GM12878 (cell line): ENCODE measurements at regions of chr1 and their contacts with region 1.

Region 1: DNA sequence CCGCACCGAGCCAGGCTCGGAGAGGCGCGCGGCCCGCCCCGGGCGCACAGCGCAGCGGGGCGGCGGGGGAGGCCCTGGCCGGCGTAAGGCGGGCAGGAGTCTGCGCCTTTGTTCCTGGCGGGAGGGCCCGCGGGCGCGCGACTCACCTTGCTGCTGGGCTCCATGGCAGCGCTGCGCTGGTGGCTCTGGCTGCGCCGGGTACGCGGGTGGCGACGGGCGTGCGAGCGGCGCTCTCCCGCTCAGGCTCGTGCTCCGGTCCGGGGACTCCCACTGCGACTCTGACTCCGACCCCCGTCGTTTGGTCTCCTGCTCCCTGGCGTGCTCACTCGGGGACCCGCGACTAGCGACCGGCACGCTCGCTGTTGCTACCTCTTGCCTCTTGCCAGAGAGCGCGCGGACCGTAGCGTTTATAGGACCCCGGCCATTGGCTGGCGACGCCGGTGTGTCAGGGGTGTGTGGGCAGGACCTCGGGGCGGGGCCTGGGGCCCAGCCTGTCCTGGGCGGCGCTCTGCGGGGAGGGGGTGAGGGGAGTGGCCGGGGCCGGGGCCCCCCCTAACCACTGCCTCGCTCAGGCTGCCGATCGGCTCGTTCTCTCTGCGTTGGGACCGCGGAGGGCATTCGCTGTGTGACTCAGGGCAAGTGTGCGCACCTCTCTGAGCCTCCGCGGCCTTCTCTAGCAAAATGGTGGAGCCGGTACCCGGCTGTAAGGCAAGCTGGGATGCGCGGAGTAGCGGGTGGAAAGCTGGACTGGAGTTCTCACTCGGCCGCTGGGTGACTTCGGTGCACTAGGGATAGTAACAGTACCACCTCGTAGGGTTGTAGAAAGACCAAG is at the start of gene SLC2A1:
- DNase-seq: peak; percentile 79
- ATAC-seq: peak; percentile 88
- H3K4me3 ChIP-seq: peak within 1 kb of the TSS; percentile 88
- H3K27ac ChIP-seq: peak within 1 kb of the TSS; percentile 78
- H3K4me1 ChIP-seq: peaks cover 38% of the 10 kb centered on the region
- H3K27me3 ChIP-seq: no peaks in the 10 kb centered on the region
- CTCF ChIP-seq: no peak; a peak in 1 of 6 replicates
- EP300 ChIP-seq: peak in 1 of 2 experiments; percentile 14; a peak in 1 of 4 replicates
- POLR2A ChIP-seq: peak; percentile 100
- RAD21 ChIP-seq: no peak
- polyA plus RNA-seq, gene SLC2A1: 5.7 to 8.2 TPM

Region 2: DNA sequence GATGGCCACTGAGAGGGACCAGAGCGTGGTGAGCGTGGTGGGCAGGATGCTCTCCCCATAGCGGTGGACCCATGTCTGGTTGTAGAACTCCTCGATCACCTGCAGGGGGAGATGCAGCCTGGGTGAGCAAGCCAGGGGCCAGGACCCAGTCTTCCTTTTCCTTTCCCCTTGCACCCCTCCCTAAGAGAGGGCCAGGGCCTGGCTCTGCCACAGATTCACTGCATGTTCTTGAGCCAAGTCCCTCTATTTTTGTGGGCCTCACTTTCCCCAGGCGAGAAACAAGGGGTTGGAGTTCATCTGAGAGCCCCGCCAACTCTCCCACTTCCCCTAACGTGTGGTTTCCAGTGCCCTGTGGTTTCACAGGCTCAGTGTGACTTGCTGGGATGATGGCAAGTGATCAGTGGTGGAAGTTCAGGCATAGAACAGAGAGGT is 27.6 kb before region 1 on chr1:
- CTCF ChIA-PET with region 1: interaction called, 57 read pairs
- POLR2A ChIA-PET with region 1: interaction called, 22 read pairs
- RAD21 ChIA-PET with region 1: interaction called, 21 read pairs
- SMC1A ChIA-PET with region 1: interaction called, 71 read pairs
- in situ Hi-C with region 1: no loop called
- intact Hi-C with region 1: loop called (anchors 1 kb)
- DNase-seq: peak; percentile 69
- ATAC-seq: peak; percentile 61
- H3K4me3 ChIP-seq: 0 out of 2 replicates have a peak overlapping the region, but pooled peaks have one; percentile 17
- H3K27ac ChIP-seq: peak overlapping the region; percentile 95
- H3K4me1 ChIP-seq: peaks cover 63% of the 10 kb centered on the region
- H3K27me3 ChIP-seq: no peaks in the 10 kb centered on the region
- CTCF ChIP-seq: peak; percentile 53 to 65 (median 65)
- EP300 ChIP-seq: peak in 1 of 2 experiments; percentile 36; a peak in 1 of 4 replicates
- POLR2A ChIP-seq: no peak
- RAD21 ChIP-seq: peak; percentile 60

Region 3: DNA sequence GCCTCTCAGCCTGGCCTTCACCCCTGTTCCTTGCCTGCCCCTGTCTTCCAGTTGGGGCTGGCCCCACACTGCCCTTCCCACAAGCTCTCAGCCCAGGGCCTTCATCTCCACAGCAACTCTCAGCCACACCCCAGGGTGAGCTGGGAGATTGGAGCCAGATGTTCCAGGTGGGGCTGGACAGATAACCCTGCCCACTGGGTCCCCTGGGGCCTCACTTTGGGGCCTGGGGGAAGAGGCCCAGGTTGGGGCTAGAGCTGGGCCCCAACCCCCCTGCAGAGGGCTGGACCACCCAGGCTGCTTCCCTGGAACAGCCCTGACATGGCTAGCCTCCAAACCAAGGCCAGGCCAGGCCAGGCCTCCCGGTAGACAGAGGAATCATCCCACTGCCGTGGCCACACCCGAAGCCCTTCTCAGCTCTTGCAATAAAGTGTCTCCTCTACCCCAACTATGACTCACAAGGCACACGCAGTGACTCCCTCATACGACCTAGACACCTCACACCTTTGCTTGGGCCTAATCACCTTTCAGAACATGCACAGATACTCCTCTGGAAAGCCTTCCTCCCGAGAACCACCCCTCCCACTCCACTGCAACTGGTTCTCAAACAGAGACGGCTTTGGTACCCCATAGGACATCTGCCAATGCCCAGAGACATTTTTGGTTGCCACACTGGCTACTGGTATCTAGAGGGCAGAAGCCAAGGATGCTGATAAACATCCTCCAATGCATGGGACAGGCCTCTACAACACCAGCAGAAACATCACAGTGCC is 22.2 kb before region 1 on chr1:
- CTCF ChIA-PET with region 1: interaction called, 57 read pairs
- POLR2A ChIA-PET with region 1: interaction called, 22 read pairs
- RAD21 ChIA-PET with region 1: interaction called, 21 read pairs
- SMC1A ChIA-PET with region 1: interaction called, 71 read pairs
- in situ Hi-C with region 1: no loop called
- intact Hi-C with region 1: loop called (anchors 1 kb)
- DNase-seq: no peak
- ATAC-seq: no peak
- H3K4me3 ChIP-seq: no peak overlapping the region
- H3K27ac ChIP-seq: peak overlapping the region; percentile 38
- H3K4me1 ChIP-seq: peaks cover 92% of the 10 kb centered on the region
- H3K27me3 ChIP-seq: no peaks in the 10 kb centered on the region
- CTCF ChIP-seq: no peak
- EP300 ChIP-seq: no peak
- POLR2A ChIP-seq: no peak
- RAD21 ChIP-seq: no peak

Region 4: DNA sequence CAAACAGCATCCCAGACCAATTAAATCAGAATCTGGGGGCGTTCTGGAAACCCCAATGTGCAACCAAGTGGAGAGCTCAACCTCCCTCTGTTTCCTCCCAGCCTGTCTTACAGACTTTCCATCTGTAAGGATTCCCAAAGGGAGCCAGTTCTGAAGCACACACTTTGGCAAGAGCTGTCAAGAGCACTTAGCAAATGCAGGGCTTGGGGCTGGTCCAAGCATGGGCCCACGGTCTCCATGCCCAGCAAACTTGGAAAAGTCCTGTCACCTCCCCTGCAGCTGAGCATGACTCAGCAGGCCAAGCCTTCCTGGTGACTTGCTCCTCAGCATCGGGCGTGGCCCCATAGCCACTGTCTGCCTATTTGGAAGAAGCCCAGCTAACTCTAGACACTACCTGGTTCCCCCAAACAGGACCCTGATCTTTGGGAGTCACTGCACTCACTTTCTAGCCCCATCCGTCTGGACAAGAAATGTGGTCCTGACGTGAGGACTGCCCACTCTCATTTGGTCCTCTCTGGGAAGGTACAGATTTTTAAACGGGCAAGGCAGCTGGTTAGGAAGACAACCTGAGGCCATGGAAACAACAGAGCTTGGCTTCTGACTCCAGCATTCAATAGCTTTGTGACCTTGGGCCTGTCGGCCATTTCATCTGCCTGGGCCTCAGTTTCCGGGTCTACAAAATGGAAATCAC is 16.9 kb before region 1 on chr1:
- CTCF ChIA-PET with region 1: interaction called, 57 read pairs
- POLR2A ChIA-PET with region 1: interaction called, 22 read pairs
- RAD21 ChIA-PET with region 1: interaction called, 11 read pairs
- SMC1A ChIA-PET with region 1: interaction called, 71 read pairs
- in situ Hi-C with region 1: no loop called
- intact Hi-C with region 1: no loop called
- DNase-seq: no peak
- ATAC-seq: no peak
- H3K4me3 ChIP-seq: no peak overlapping the region
- H3K27ac ChIP-seq: peak overlapping the region; percentile 74
- H3K4me1 ChIP-seq: peaks cover 92% of the 10 kb centered on the region
- H3K27me3 ChIP-seq: no peaks in the 10 kb centered on the region
- CTCF ChIP-seq: no peak
- EP300 ChIP-seq: no peak
- POLR2A ChIP-seq: no peak
- RAD21 ChIP-seq: no peak